ENCODE measurements at regions of chr7 and their contacts with region 1.

Region 1: DNA sequence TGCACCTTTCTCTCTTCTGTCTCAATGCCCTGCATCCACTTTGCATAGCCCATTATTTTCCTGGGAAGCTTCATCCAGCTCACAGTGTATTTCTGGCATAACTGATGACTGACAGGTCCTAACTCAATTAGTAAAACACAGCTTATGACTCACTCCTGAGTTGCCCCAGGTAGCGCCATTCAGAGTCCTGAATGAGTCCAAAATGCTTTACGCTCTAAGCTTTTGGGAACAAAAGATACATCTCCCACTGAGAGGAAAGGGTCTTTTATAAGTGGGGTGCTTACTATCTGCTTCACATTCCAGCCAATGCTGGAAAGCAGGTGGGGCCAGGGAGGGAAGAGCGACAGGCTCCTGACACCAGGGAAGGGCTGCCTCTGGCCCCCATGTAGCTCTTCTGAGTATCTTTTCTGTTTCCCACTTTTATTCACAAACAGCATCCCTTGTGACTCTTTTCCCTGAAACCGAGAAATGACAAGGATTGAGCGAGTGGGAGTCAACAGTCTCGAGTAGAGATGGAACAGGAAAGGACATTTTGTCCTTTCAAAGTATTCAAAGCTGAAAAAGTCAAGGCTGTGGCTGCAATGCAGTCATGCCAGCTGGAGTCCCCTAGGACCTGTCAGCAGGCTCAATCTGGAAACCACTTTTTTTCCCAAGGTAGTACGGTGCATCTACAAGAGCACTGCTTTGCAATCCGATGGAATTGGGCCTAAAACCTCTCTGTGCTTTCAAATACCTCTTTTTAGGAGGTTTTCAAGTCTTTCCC is 479.4 kb upstream of the PODXL start:
- DNase-seq: no peak
- ATAC-seq: no peak
- H3K4me3 ChIP-seq: no peak overlapping the region
- H3K27ac ChIP-seq: no peak overlapping the region
- H3K4me1 ChIP-seq: peaks cover 4% of the 10 kb centered on the region in 2 experiments
- H3K27me3 ChIP-seq: peaks cover 38% of the 10 kb centered on the region; the same call in 1 of the 2 replicates
- CTCF ChIP-seq: no peak
- POLR2A ChIP-seq: no peak
- RAD21 ChIP-seq: no peak

Region 2: DNA sequence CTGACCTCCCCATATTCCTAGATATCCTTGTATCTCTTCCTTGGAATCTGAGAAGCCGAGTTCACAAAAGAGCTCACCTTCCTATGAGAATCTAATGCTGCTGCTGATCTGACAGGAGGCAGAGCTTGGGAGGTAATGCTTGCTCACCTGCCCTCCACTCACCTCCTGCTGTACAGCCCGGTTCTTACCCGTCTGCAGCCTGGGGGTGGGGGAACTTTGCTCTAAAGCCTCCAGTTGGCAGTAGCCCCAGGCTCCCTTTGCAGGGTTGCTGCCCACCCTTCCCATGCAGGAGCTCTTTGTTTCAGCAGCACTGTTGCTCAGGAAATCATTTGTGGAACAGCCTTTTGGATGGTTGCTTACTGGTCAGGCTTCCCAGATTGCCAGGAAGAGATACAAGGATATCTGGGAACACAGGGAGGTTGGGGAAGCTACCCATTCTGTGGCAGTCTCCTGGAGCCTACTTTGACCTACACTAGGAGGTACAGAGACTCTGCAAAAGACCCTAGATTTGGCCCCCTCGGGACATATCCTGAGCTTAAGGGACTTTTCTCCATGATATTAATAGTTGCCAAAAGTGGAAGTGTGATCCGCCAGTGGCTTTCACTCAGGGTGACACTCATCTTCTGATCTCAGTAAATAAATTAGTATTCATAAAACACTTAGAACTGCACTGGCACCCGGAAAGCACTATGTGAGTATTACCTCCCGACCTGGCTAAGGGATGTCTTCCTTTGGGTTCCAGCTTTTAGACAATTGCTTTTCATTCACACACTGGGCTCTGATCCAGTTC is 115.7 kb before region 1 on chr7:
- CTCF ChIA-PET with region 1: no interaction called
- POLR2A ChIA-PET with region 1: no interaction called
- RAD21 ChIA-PET with region 1: no interaction called
- intact Hi-C with region 1: no loop called
- DNase-seq: no peak
- ATAC-seq: peak; percentile 34; the same call in 1 of the 2 replicates
- H3K4me3 ChIP-seq: no peak overlapping the region
- H3K27ac ChIP-seq: no peak overlapping the region
- H3K4me1 ChIP-seq: no peaks in the 10 kb centered on the region
- H3K27me3 ChIP-seq: peaks cover 56% of the 10 kb centered on the region
- CTCF ChIP-seq: no peak
- POLR2A ChIP-seq: no peak
- RAD21 ChIP-seq: no peak

Region 3: DNA sequence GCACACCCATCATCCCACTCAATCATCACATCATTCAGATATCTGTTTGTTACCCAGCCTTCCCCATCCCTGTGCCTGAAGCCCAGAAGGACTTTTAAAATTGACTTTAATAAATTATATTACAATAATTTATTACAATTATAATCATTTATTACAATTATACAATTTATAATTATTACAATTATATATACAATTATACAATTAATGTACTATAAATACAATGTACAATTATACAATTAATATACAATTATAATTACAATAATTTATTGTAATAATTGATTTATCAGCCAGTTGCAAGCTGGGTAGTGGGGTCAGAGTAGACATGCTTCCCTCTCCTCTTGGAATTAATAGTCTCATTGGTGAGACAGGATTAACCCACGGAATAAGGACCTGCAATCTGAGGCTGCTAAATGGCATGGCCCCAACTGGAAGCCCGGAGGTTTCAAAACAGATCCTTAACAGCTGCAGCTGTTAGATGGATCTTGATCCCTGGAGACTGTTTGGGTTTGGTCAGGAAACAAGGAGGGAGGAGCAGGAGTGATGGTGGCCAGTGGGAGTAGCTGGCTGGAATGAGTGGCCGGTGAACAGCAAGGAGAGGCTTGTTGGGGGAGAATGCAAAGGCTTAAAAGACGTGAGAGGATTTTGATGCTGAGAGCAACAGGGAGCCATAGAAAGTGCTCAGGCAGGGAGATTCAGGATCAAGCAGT is 76.5 kb before region 1 on chr7:
- CTCF ChIA-PET with region 1: no interaction called
- POLR2A ChIA-PET with region 1: no interaction called
- RAD21 ChIA-PET with region 1: no interaction called
- intact Hi-C with region 1: loop called (anchors 2 kb)
- DNase-seq: no peak
- ATAC-seq: no peak
- H3K4me3 ChIP-seq: no peak overlapping the region
- H3K27ac ChIP-seq: no peak overlapping the region
- H3K4me1 ChIP-seq: no peaks in the 10 kb centered on the region
- H3K27me3 ChIP-seq: peaks cover 43% of the 10 kb centered on the region; the same call in 1 of the 2 replicates
- CTCF ChIP-seq: no peak
- POLR2A ChIP-seq: no peak
- RAD21 ChIP-seq: no peak

Region 4: DNA sequence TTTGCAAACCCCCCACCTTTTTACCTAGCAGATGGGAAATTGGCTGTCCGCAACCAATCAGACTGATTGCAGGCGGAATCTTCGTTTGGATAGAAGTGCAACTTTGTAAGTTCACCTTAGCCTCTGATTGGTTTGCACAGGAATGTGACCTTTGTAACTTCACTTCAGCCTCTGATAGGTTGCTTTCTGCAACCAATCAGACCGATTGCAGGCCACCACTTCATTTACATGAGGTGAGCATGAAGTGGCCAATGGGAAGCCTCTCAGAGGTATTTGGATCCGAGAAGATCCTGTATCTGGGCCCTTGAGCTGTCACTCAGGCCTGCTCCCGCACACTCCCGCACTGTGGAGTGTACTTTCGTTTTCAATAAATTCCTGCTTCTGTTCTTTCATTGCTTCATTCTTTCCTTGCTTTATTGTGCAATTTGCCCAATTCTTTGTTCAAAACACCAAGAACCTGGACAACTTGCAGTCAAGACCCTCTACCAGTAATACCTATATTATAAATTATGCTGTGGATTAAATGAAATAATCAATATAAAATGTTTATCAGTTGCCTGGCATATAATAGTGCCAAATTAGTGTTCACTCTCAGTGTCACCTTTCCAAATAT is 49.1 kb after region 1 on chr7:
- CTCF ChIA-PET with region 1: no interaction called
- POLR2A ChIA-PET with region 1: no interaction called
- RAD21 ChIA-PET with region 1: no interaction called
- intact Hi-C with region 1: loop called (anchors 5 kb)
- DNase-seq: peak; percentile 19
- ATAC-seq: peak; percentile 93
- H3K4me3 ChIP-seq: no peak overlapping the region
- H3K27ac ChIP-seq: no peak overlapping the region
- H3K4me1 ChIP-seq: no peaks in the 10 kb centered on the region
- H3K27me3 ChIP-seq: peaks cover 29% of the 10 kb centered on the region
- CTCF ChIP-seq: no peak
- POLR2A ChIP-seq: no peak
- RAD21 ChIP-seq: no peak

Region 5: DNA sequence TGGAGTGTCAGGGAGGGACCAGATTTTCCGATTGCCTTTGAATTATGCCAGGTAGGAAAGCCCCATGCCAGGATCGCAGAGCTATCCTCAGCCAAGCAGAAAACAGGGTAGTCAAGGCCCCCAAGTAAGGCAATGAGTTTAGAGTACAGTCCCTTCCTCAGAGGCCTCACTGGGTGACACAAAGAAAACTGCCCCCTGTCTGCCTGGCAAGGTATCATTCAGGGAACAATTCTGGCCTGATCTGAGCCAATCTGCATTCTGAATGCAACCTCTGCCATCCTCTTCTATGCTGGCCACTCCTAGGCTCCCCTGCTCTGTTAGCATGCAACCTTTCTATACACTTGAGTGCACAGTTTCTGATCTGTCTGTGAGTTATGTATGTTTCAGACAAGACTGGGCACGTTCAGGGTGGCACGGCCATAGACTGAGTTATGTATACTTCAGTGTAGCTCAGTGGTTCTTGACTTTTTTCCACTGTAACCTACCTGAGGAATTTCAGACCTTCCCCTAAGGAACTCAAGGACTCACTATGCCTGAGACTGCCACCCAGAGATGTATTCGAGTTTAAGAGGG is 203.7 kb after region 1 on chr7:
- CTCF ChIA-PET with region 1: no interaction called
- POLR2A ChIA-PET with region 1: no interaction called
- RAD21 ChIA-PET with region 1: no interaction called
- intact Hi-C with region 1: no loop called
- DNase-seq: no peak
- ATAC-seq: 0 out of 2 replicates have a peak, but pooled peaks have one; percentile 25
- H3K4me3 ChIP-seq: no peak overlapping the region
- H3K27ac ChIP-seq: no peak overlapping the region
- H3K4me1 ChIP-seq: no peaks in the 10 kb centered on the region
- H3K27me3 ChIP-seq: peaks cover 48% of the 10 kb centered on the region
- CTCF ChIP-seq: peak in 1 of 3 experiments; percentile 12; a peak in 1 of 6 replicates
- POLR2A ChIP-seq: no peak
- RAD21 ChIP-seq: no peak

Measured in HCT116 (cell line).